Gastrocnemius medialis (tissue), 4 donors: ENCODE measurements at regions of chr19 and their contacts with region 1.

Region 1: DNA sequence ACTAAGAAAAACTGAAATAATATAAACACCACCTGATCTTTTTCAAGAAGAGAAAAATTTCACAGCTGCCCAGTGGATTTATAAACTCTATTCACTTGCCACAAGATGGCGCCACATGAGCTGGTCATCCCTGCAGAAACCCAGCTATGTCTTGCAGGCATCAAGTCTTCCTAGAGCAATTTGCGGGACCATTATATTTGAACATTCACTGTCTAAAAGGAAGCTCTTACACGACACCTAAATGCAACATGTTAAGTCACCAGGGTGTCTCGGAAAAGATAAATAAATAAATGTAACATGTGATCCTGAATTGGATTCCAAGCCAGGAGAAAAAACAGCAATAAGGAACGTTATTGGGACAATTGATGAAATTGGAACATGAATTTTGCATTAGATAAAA is 20.3 kb upstream of the AKT2 start:
- DNase-seq: peak; percentile 64 to 66
- ATAC-seq: peak; percentile 85 to 89
- H3K4me3 ChIP-seq: no peak overlapping the region
- H3K27ac ChIP-seq: no peak overlapping the region
- H3K4me1 ChIP-seq: no peaks in the 10 kb centered on the region
- H3K27me3 ChIP-seq: no peaks in the 10 kb centered on the region
- CTCF ChIP-seq: peak; percentile 52 to 80 (median 73)
- POLR2A ChIP-seq: no peak

Region 2: DNA sequence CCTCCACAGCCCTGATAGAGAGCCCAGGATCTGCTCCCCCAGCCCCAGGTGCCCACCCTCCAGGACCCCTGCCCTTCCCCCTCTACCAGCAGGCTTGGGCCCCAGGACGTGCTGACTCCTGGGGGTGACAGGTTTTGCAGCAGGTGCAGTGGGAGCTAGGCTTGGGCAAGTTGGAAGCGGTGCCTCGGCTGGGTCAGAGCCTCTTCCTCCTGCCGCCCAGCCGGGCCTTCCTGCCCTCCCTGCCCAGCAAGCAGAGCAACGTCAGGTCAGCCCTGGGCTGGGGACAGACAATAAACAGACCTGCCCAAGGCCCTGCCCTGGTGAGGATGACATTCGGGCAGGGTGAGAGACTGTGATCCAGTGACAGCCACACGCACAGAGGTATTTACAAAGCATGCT is 1117.8 kb before region 1 on chr19:
- in situ Hi-C with region 1: no loop called
- intact Hi-C with region 1: no loop called
- DNase-seq: no peak
- ATAC-seq: no peak
- H3K4me3 ChIP-seq: no peak overlapping the region
- H3K27ac ChIP-seq: no peak overlapping the region
- H3K4me1 ChIP-seq: no peaks in the 10 kb centered on the region
- H3K27me3 ChIP-seq: peaks cover 0 to 10% (median 0%) of the 10 kb centered on the region in 3 donors
- CTCF ChIP-seq: no peak
- POLR2A ChIP-seq: no peak

Region 3: GRCh38 chr19:40274585-40275552 is 30.5 kb before region 1 on chr19:
- in situ Hi-C with region 1: no loop called
- intact Hi-C with region 1: no loop called
- DNase-seq: peak in 1 of 2 donors; percentile 6
- ATAC-seq: no peak
- H3K4me3 ChIP-seq: no peak overlapping the region
- H3K27ac ChIP-seq: peak overlapping the region; percentile 58 to 77 (median 69)
- H3K4me1 ChIP-seq: peaks cover 54 to 69% of the 10 kb centered on the region in 2 donors
- H3K27me3 ChIP-seq: no peaks in the 10 kb centered on the region
- CTCF ChIP-seq: no peak
- POLR2A ChIP-seq: no peak

Region 4: DNA sequence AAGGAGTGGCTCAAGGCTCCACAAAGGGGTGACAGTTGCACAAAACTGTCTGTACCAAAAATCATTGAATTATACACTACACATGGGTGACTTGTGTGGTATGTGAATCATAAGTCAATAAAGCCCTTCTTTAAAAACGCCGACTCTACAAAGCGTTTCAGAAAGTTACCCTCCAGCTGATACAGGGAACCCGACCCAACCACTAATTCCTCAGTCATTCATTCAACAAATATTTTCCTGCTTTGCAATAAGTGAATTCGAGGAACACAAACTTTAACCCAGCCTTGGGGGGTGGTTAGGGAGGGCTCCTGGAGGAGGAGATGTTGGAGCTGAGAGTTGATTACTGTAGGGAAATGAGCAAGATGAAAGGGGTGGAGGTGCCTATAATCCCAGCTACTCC is 327.8 kb after region 1 on chr19:
- in situ Hi-C with region 1: loop called in 1 of 4 experiments (anchors 10 kb)
- intact Hi-C with region 1: no loop called
- DNase-seq: no peak
- ATAC-seq: no peak
- H3K4me3 ChIP-seq: no peak overlapping the region
- H3K27ac ChIP-seq: no peak overlapping the region
- H3K4me1 ChIP-seq: peaks cover 0 to 3% of the 10 kb centered on the region in 2 donors
- H3K27me3 ChIP-seq: no peaks in the 10 kb centered on the region
- CTCF ChIP-seq: no peak
- POLR2A ChIP-seq: no peak